Mucosa of descending colon (tissue), 3 donors: ENCODE measurements at regions of chr5 and their contacts with region 1.

Region 1: DNA sequence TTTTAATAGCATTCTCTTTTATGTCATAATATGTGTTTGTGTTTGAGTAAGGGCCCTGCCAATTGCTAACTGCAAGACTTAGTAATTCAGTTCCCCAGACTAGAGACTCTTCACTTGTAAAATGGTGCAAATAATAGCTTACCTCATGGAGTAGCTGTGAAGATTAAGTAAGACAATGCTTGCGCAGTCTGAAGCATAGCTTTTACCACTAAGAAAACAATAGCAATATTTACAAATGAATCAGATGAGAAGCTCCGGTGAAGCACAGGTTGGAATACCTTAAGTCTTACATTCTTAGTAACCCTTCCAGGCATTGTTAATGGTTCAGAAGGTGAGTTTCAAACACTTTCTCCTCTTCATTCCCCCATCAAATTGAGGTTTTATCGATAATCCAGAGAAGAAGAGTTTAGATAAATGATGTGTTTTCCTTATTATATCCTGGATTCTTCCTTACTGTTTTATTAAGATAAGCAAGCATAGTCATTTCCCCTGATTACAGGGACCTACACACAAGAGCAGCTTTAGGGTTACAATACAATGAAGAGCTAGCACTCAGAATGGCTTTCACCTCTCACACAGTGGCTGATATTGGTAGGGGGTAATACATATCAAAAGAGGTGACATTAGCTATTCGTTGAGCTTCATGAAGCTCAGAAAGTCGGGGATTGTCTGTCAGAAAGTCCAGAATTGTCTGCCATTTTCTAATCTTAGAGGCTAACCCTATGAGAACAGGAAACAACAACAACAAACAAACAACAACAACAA is 96.4 kb upstream of the EDIL3 start:
- DNase-seq: no peak
- ATAC-seq: no peak
- H3K4me3 ChIP-seq: no peak overlapping the region
- H3K4me1 ChIP-seq: no peaks in the 10 kb centered on the region
- CTCF ChIP-seq: no peak

Region 2: GRCh38 chr5:83955916-83956315 is 525.1 kb before region 1 on chr5:
- intact Hi-C with region 1: loop called in 1 of 2 experiments (anchors 5 kb)
- DNase-seq: no peak
- ATAC-seq: no peak
- H3K4me3 ChIP-seq: no peak overlapping the region
- H3K4me1 ChIP-seq: no peaks in the 10 kb centered on the region
- CTCF ChIP-seq: no peak